Dorsolateral prefrontal cortex (tissue), 120 donors: ENCODE measurements at regions of chr19 and their contacts with region 1.

Region 1: DNA sequence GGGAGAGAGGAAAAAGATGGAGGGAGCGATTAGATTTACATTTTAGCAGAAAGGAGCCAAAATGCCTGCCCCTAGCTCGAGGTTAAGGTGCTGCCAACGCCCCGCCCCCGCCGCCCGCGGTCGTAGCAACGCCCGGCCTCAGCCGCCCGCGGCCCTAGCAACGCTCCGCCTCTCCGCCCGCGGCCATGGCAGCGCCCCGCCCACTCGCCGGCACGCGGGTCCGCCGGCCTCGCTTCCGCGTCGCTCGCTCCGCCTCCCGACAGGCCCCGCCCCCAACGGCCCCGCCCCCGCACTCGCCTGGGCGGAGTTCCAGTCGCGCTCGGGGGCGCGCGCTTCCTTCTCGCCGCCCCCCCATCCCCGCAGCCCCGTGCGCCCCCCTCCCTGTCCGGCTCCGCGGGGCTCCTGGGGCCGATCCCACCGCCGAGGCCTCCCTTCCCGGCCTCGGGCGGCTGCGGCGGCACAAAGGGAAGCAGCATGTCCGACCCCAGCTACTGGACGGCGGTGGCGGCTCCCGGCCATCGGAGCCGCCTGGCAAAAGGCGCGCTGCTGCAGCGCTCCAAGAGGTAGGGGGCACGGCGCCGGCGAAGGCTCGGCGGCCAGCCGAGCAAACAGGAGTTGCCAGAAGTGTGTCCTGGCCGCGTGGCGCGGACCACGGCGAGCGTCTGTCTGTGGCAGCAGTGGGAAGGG is 20.3 kb downstream of the MAST3 start:
- DNase-seq: peak; percentile 68 to 95 (median 84)
- H3K4me3 ChIP-seq: peak overlapping the region; percentile 38 to 80 (median 66)
- H3K27ac ChIP-seq: peak overlapping the region in 55 of 59 donors; percentile 28 to 90 (median 77)
- H3K27me3 ChIP-seq: no peaks in the 10 kb centered on the region
- CTCF ChIP-seq: peak in 16 of 56 donors; percentile 3 to 31 (median 14)

Region 2: DNA sequence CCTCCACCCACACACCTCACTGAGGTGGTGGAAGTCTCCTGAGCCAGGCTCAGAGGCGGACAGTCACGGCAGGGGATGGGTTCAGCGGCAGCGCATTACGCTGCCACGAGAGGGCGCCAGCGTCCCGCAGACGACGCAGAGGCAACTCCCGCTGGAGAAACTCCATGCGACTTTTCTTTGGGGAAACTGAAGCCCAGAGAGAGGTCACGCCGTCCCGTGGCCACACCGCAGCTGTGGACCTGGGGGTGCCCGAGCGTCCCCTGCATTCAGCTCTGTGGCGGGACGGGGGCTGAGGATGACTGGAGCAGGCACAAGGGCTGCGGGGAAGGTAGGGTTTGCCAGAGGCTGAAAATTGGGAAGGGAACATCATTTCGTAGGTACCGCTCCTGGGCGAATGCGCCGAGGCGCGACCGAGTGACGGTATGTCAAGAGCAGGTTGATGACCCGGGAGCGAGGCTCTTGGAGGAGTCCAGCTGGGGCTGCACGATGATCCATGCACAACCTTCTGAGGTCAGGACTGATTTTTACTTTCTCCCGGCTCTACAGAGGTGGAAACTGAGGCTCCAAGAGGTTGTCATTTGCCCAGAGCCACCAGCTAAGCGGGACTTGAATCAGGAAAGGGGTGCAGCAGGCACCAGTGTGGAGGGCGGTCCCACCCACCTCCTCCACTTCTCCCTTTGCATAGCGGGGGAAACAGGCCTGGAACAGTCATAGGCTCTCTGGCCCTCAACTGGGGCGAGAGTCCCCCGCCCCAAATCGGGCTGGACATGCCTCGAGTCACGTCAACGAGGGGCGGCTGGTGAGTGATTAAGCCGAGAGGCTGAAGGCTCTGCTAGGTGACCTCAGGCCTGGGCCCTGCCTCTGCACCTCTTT is 110.6 kb before region 1 on chr19:
- intact Hi-C with region 1: loop called (anchors 5 kb)
- DNase-seq: peak; percentile 75 to 93 (median 82)
- H3K4me3 ChIP-seq: peak overlapping the region; percentile 50 to 94 (median 73)
- H3K27ac ChIP-seq: peak overlapping the region; percentile 72 to 99 (median 93)
- H3K27me3 ChIP-seq: no peaks in the 10 kb centered on the region
- CTCF ChIP-seq: peak; percentile 90 to 100 (median 98)

Region 3: GRCh38 chr19:18063463-18063862 is 54.4 kb before region 1 on chr19:
- intact Hi-C with region 1: loop called in 1 of 2 experiments (anchors 5 kb)
- DNase-seq: no peak
- H3K4me3 ChIP-seq: no peak overlapping the region
- H3K27ac ChIP-seq: peak overlapping the region in 46 of 59 donors; percentile 7 to 98 (median 84)
- H3K27me3 ChIP-seq: no peaks in the 10 kb centered on the region
- CTCF ChIP-seq: peak in 23 of 56 donors; percentile 9 to 59 (median 33)

Region 4: DNA sequence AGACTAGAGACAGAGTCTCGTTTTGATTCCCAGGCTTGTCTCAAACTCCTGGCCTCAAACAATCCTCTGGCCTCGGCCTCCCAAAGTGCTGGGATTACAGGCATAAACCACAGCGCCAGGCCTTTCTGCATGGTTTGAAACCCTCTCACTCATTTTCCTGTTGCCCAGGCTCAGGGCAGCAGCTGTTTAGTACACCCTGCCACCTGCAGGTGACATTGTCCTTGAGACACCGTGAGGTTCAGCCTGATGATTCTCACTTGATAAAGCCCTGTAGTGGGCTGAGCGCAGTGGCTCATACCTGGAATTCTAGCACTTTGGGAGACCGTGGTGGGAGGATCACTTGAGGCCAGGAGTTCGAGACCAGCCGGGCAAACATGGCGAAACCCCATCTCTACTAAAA is 43.6 kb before region 1 on chr19:
- intact Hi-C with region 1: no loop called
- DNase-seq: no peak
- H3K4me3 ChIP-seq: no peak overlapping the region
- H3K27ac ChIP-seq: peak overlapping the region in 1 of 59 donors; percentile 11
- H3K27me3 ChIP-seq: no peaks in the 10 kb centered on the region
- CTCF ChIP-seq: peak in 1 of 56 donors; percentile 9

Region 5: GRCh38 chr19:18152444-18152816 is 34.6 kb after region 1 on chr19:
- intact Hi-C with region 1: loop called (anchors 2 to 5 kb)
- DNase-seq: peak; percentile 87 to 98 (median 96)
- H3K4me3 ChIP-seq: peak overlapping the region; percentile 42 to 99 (median 88)
- H3K27ac ChIP-seq: peak overlapping the region; percentile 89 to 99 (median 97)
- H3K27me3 ChIP-seq: no peaks in the 10 kb centered on the region
- CTCF ChIP-seq: peak in 54 of 56 donors; percentile 30 to 78 (median 61)

Region 6: GRCh38 chr19:18160971-18161635 is 43.3 kb after region 1 on chr19:
- intact Hi-C with region 1: loop called (anchors 5 kb)
- DNase-seq: peak in 6 of 10 donors; percentile 63 to 88 (median 68)
- H3K4me3 ChIP-seq: peak overlapping the region; percentile 22 to 67 (median 50)
- H3K27ac ChIP-seq: peak overlapping the region in 58 of 59 donors; percentile 29 to 95 (median 84)
- H3K27me3 ChIP-seq: no peaks in the 10 kb centered on the region
- CTCF ChIP-seq: peak in 53 of 56 donors; percentile 22 to 89 (median 62)

Region 7: DNA sequence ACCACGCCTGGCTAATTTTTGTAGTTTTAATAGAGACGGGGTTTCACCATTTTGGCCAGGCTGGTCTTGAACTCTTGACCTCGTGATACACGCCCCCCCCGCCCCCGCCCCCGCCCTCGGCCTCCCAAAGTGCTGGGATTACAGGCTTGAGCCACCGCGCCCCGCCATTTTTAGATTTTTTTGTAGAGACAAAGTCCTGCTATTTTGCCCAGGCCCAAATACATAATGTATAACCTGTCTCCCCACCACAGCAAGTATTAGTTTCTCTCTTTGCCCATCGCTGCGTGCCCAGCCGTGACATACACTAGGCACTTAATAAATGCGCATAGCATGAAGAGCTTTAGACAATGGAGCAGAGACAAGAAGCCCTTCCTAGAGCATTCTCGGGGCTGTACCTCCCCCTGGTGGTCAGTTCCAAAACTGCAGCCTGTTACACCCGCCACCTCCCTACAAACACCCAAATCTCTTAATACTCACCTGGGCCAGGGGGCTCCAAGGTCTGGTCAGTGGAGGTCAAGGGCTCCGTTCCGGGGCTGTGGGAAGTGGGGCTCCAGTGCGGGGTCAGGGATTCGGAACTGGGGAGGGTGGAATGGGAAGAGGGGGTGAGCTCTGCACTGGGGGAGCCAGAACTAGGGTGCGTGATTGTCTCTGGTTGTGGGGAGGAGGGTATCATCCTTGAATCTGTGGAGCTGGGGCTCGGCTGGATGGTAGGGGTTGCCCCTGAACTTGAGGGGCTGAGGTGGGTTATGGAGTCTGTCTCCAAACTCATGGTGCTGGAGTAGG is 133.9 kb after region 1 on chr19:
- intact Hi-C with region 1: loop called (anchors 5 to 10 kb)
- DNase-seq: peak in 9 of 10 donors; percentile 64 to 85 (median 75)
- H3K4me3 ChIP-seq: peak overlapping the region in 2 of 59 donors; percentile 14 to 17
- H3K27ac ChIP-seq: no peak overlapping the region
- H3K27me3 ChIP-seq: no peaks in the 10 kb centered on the region
- CTCF ChIP-seq: peak; percentile 77 to 99 (median 94)